GM10248 (cell line): ENCODE measurements at regions of chr2 and their contacts with region 1.

Region 1: DNA sequence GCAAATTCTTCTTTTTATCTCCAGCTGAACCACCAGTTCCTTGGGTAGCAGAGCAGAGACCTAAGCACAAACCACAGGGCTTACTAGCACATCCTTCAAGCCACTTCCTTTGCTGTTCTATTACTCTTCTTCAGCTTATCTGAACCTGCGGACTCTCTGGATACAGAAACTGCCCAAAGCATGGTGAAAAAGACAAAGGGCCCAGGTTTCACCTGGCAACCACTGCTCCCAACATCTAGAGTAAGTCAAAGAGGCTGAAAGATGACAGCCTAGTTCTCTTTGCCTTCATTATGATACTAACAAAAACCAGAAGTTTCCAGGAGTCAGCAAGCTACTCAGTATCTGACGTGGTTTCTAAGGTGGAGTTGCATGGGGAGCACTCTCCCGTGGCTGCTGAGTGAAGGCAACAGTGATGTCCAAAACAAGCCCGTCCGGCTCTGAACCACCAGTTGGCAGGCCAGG is 43.4 kb downstream of the KANSL3 start:
- DNase-seq: no peak
- CTCF ChIP-seq: no peak

Region 2: DNA sequence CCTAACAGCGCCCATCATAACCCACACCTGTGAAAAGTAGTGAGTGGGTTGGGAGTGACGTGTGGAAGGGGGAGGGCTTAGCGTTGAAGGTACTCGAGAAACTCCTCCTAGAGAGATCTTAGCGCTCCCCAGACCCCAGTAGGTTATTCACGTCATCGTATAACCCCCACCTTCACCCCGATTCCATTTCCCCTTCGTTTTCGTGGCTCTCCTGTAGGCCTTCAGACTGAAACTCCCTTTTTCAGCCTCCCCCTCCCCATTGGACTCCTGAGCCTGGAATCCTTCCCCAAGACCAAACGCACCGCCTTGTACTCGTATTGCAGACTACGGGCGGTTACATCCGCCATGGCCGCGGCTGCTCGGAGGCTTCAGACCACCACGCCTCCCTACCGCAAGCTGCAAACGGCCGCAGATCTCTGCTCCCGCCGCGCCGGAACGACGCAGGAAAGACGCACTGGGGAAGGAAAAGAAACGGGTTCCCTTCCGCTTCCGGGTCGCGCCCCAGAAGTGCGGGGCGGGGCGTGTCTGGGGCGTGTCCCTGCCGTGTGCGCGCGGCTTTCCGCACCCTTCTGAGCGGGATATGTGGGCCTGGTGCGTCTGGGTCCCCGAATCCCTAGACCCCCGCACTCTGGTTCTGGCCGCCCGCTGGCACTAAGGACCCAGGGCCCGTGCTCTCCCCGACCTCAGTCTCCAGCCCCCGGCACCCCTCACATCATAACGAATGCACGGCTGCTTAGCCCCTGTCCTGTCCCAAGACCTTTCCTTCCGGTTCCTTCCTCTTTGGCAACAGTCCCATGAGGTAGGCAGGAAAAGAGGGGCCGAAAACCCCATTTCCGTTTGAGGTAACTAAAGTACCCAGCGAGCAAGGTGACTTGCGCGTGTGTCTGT is 289.4 kb before region 1 on chr2 and contains the start of gene SNRNP200:
- CTCF ChIA-PET with region 1: no interaction called
- POLR2A ChIA-PET with region 1: no interaction called
- DNase-seq: peak; percentile 92
- CTCF ChIP-seq: no peak

Region 3: GRCh38 chr2:96477458-96477857 is 117.3 kb before region 1 on chr2:
- CTCF ChIA-PET with region 1: no interaction called
- POLR2A ChIA-PET with region 1: no interaction called
- DNase-seq: no peak
- CTCF ChIP-seq: no peak

Region 4: GRCh38 chr2:96580771-96581170 is 14.0 kb before region 1 on chr2:
- CTCF ChIA-PET with region 1: interaction called, 25 read pairs
- POLR2A ChIA-PET with region 1: no interaction called
- DNase-seq: no peak
- CTCF ChIP-seq: peak; percentile 39

Region 5: GRCh38 chr2:96756788-96757479 is 162.2 kb after region 1 on chr2:
- CTCF ChIA-PET with region 1: no interaction called
- POLR2A ChIA-PET with region 1: no interaction called
- DNase-seq: no peak
- CTCF ChIP-seq: peak; percentile 5